HCT116 (cell line): ENCODE measurements at regions of chr7 and their contacts with region 1.

Region 1: DNA sequence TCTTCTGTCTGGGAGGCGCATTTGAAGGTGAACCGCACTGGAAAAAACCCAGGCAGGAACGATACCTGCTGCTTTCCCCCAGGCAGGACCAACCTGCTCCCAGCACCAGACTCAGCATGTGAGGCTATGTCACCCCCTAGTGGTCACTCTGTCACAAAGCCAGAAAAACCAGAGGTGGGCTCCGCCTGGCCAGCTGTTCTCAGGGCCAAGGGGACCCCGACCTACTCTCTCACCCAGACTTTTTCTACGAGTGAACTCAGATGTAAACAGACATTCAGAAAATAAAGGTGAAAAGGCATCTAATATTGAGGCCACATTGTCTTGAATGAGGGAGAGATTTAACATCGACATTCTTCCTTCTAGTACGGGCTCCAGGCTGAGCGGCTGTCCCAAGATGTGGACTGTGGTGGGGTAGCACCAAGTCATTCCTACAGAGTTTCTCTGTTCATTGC is 117.3 kb downstream of the PRKAG2 start:
- DNase-seq: peak; percentile 57
- ATAC-seq: peak; percentile 73
- H3K4me3 ChIP-seq: no peak overlapping the region
- H3K27ac ChIP-seq: no peak overlapping the region
- H3K4me1 ChIP-seq: peaks cover 21 to 38% of the 10 kb centered on the region in 2 experiments
- H3K27me3 ChIP-seq: no peaks in the 10 kb centered on the region
- CTCF ChIP-seq: peak in 2 of 3 experiments; percentile 91 to 93; a peak in 4 of 6 replicates
- POLR2A ChIP-seq: no peak
- RAD21 ChIP-seq: no peak

Region 2: GRCh38 chr7:151315038-151315655 is 444.5 kb before region 1 on chr7:
- CTCF ChIA-PET with region 1: no interaction called
- POLR2A ChIA-PET with region 1: no interaction called
- RAD21 ChIA-PET with region 1: no interaction called
- intact Hi-C with region 1: loop called (anchors 10 kb)
- DNase-seq: peak; percentile 54
- ATAC-seq: peak; percentile 87
- H3K4me3 ChIP-seq: no peak overlapping the region
- H3K27ac ChIP-seq: no peak overlapping the region
- H3K4me1 ChIP-seq: no peaks in the 10 kb centered on the region
- H3K27me3 ChIP-seq: no peaks in the 10 kb centered on the region
- CTCF ChIP-seq: peak; percentile 72 to 86 (median 78)
- POLR2A ChIP-seq: no peak
- RAD21 ChIP-seq: peak; percentile 86

Region 3: GRCh38 chr7:151459726-151460473 is 299.7 kb before region 1 on chr7:
- CTCF ChIA-PET with region 1: no interaction called
- POLR2A ChIA-PET with region 1: no interaction called
- RAD21 ChIA-PET with region 1: no interaction called
- intact Hi-C with region 1: loop called (anchors 5 kb)
- DNase-seq: peak; percentile 57
- ATAC-seq: peak; percentile 79
- H3K4me3 ChIP-seq: peak overlapping the region; percentile 6 to 46
- H3K27ac ChIP-seq: peak overlapping the region; percentile 17
- H3K4me1 ChIP-seq: peaks cover 18 to 29% of the 10 kb centered on the region in 2 experiments
- H3K27me3 ChIP-seq: no peaks in the 10 kb centered on the region
- CTCF ChIP-seq: peak in 2 of 3 experiments; percentile 14 to 21; a peak in 2 of 6 replicates
- POLR2A ChIP-seq: no peak
- RAD21 ChIP-seq: peak; percentile 57

Region 4: GRCh38 chr7:151626422-151627115 is 133.0 kb before region 1 on chr7:
- CTCF ChIA-PET with region 1: no interaction called
- POLR2A ChIA-PET with region 1: no interaction called
- RAD21 ChIA-PET with region 1: no interaction called
- intact Hi-C with region 1: loop called (anchors 1 kb)
- DNase-seq: no peak
- ATAC-seq: peak; percentile 92
- H3K4me3 ChIP-seq: no peak overlapping the region
- H3K27ac ChIP-seq: no peak overlapping the region
- H3K4me1 ChIP-seq: peaks cover 6 to 14% of the 10 kb centered on the region in 2 experiments
- H3K27me3 ChIP-seq: no peaks in the 10 kb centered on the region
- CTCF ChIP-seq: peak; percentile 72 to 89 (median 78)
- POLR2A ChIP-seq: no peak
- RAD21 ChIP-seq: peak; percentile 89

Region 5: GRCh38 chr7:151808400-151809183 is 49.0 kb after region 1 on chr7:
- CTCF ChIA-PET with region 1: no interaction called
- POLR2A ChIA-PET with region 1: no interaction called
- RAD21 ChIA-PET with region 1: no interaction called
- intact Hi-C with region 1: no loop called
- DNase-seq: peak; percentile 44
- ATAC-seq: peak; percentile 91
- H3K4me3 ChIP-seq: 0 out of 4 replicates have a peak overlapping the region, but pooled peaks of 1 of the 2 experiments have one; percentile 12
- H3K27ac ChIP-seq: no peak overlapping the region
- H3K4me1 ChIP-seq: peaks cover 4 to 18% of the 10 kb centered on the region in 2 experiments; a peak in 3 of 4 replicates
- H3K27me3 ChIP-seq: no peaks in the 10 kb centered on the region
- CTCF ChIP-seq: no peak
- POLR2A ChIP-seq: no peak
- RAD21 ChIP-seq: no peak

Region 6: GRCh38 chr7:151876899-151877777 is 117.5 kb after region 1 on chr7 and contains the start of gene PRKAG2:
- CTCF ChIA-PET with region 1: no interaction called
- POLR2A ChIA-PET with region 1: no interaction called
- RAD21 ChIA-PET with region 1: no interaction called
- intact Hi-C with region 1: loop called (anchors 5 kb)
- DNase-seq: no peak
- ATAC-seq: peak; percentile 58
- H3K4me3 ChIP-seq: peak within 1 kb of the TSS; percentile 57 to 66
- H3K27ac ChIP-seq: peak within 1 kb of the TSS; percentile 45; the same call in 1 of the 2 replicates
- H3K4me1 ChIP-seq: peaks cover 6 to 33% of the 10 kb centered on the region in 2 experiments; a peak in 3 of 4 replicates
- H3K27me3 ChIP-seq: no peaks in the 10 kb centered on the region
- CTCF ChIP-seq: no peak
- POLR2A ChIP-seq: no peak
- RAD21 ChIP-seq: no peak
- total RNA-seq, gene PRKAG2: 23.6 TPM